K562 (cell line): ENCODE measurements at regions of chr2 and their contacts with region 1.

Region 1: DNA sequence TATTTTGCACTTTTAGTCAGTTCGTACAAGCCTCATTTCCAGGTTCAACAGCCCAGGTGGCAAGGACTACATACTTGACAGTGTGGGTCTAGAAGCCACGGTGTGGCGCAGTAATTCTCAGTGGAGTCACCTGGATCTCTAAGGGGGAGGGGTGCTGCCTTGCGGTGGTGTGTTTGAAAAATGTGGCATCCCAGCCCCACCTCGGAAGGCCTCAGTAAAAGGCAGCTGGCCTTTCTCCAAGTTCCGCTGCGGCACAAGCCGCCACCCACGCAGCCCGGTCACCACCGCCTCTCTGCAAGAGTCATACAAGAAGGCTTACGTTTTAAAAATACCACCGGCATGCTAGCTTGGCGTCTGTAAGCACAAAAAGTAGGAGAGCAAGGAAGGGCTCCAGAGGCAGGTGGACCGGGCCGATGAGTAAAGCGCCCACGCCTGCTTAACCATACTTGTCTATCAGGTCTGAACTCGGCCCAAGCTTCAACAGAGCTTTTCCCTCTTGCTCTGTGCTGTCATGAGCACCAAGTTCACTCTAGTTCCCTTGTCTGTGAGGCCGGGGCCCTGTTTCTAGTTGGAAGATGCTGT is 49.5 kb downstream of the SPRED2 start:
- DNase-seq: peak; percentile 85 to 97 (median 87)
- ATAC-seq: peak; percentile 86
- H3K4me3 ChIP-seq: no peak overlapping the region; the same call in 1 of the 2 replicates
- H3K27ac ChIP-seq: peak overlapping the region; percentile 69
- H3K4me1 ChIP-seq: peaks cover 27 to 81% of the 10 kb centered on the region in 2 experiments
- H3K27me3 ChIP-seq: no peaks in the 10 kb centered on the region
- CTCF ChIP-seq: peak; percentile 35 to 56 (median 54); a peak in 4 of 6 replicates
- EP300 ChIP-seq: peak; percentile 47; the same call in 1 of the 2 replicates
- POLR2A ChIP-seq: no peak
- RAD21 ChIP-seq: peak; percentile 28 to 55; a peak in 2 of 4 replicates

Region 2: DNA sequence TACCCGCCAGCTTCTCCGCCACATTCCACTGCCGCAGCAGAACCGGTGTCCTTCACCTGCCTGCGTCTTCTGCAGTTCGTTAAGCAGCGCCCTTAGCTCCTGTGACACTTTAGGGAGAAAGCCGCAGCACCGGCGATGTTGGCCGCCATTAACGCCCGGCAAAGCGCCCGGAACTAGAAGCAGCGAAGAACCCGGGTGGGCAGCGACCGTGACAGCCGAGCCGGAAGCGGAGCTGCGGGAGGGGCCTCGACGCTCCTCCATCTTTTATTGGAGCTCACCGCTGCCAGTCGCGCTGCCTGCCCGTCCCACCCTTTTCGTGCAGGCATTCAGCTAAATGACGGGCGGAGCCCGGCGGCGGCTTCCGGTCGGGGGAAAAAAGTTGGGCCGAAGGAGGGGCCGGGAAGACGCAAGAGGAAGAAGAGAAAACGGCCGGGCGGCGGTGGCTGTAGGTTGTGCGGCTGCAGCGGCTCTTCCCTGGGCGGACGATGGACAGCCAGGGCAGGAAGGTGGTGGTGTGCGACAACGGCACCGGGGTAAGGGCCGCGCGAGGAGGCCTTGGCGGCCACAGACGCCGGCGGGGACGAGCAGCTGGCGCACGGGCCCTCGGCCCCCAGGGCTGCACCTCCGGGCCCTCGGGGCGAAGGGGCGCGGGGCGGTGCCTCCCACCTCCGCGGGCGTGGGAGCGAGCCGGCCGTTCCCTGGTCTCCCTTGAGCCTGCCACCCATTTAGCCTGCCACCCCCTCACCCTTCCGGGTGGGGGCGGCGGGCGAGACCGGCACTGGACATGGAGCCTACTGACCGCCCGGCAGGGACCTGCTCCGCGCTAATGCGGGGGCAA is 155.2 kb before region 1 on chr2 and contains the start of gene ACTR2:
- CTCF ChIA-PET with region 1: no interaction called
- POLR2A ChIA-PET with region 1: no interaction called
- in situ Hi-C with region 1: no loop called
- intact Hi-C with region 1: no loop called
- DNase-seq: peak; percentile 87 to 97 (median 92)
- ATAC-seq: peak; percentile 88
- H3K4me3 ChIP-seq: peak within 1 kb of the TSS; percentile 72
- H3K27ac ChIP-seq: peak within 1 kb of the TSS; percentile 90
- H3K4me1 ChIP-seq: peaks cover 9 to 12% of the 10 kb centered on the region in 2 experiments; a peak in 3 of 5 replicates
- H3K27me3 ChIP-seq: no peaks in the 10 kb centered on the region
- CTCF ChIP-seq: no peak
- EP300 ChIP-seq: peak; percentile 17; the same call in 1 of the 2 replicates
- POLR2A ChIP-seq: peak; percentile 96
- RAD21 ChIP-seq: no peak
- polyA plus RNA-seq, gene ACTR2: 47.3 to 57.3 TPM

Region 3: GRCh38 chr2:65366595-65367125 is 16.2 kb before region 1 on chr2:
- CTCF ChIA-PET with region 1: no interaction called
- POLR2A ChIA-PET with region 1: interaction called, 7 read pairs
- in situ Hi-C with region 1: no loop called
- intact Hi-C with region 1: loop called (anchors 2 kb)
- DNase-seq: peak; percentile 61 to 86 (median 73)
- ATAC-seq: peak; percentile 83
- H3K4me3 ChIP-seq: peak overlapping the region; percentile 2; the same call in 1 of the 2 replicates
- H3K27ac ChIP-seq: peak overlapping the region; percentile 75
- H3K4me1 ChIP-seq: peaks cover 12 to 64% of the 10 kb centered on the region in 2 experiments
- H3K27me3 ChIP-seq: no peaks in the 10 kb centered on the region
- CTCF ChIP-seq: no peak
- EP300 ChIP-seq: peak; percentile 63; the same call in 1 of the 2 replicates
- POLR2A ChIP-seq: no peak
- RAD21 ChIP-seq: no peak

Region 4: DNA sequence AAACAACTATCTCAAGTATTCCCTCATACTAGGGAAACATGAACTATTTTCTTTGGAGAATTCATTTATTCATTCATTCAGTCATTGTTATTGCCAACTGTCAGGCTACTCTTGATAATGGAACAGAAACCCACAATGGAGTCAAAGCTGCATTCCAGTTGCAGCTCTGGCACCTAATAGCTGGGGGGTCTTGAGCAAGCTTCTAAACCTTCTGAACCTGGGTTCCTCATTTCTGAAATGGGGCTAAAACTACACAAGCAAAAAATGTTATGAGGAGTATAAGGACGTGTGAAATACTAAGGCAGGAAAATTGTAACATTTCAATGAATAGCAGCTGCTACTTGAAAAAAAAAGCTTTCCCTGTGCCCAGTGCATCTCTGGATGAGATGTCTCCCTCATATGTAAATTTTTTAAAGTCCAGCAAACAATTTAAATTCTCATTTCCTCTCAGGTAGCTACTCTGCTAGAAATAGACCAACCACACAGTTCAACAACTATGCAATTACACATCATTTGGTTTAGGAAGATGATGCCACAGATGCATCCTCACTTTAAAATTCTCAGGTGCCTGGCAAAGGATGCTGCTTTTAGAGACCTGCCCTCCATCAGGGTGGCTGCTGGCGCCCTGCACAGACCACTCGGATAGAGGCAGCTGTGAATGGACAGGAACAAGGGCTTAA is 11.0 kb after region 1 on chr2:
- CTCF ChIA-PET with region 1: no interaction called
- POLR2A ChIA-PET with region 1: interaction called, 11 read pairs
- in situ Hi-C with region 1: no loop called
- intact Hi-C with region 1: no loop called
- DNase-seq: no peak
- ATAC-seq: no peak
- H3K4me3 ChIP-seq: no peak overlapping the region
- H3K27ac ChIP-seq: no peak overlapping the region
- H3K4me1 ChIP-seq: peaks cover 12 to 24% of the 10 kb centered on the region in 2 experiments; a peak in 4 of 5 replicates
- H3K27me3 ChIP-seq: no peaks in the 10 kb centered on the region
- CTCF ChIP-seq: no peak
- EP300 ChIP-seq: no peak
- POLR2A ChIP-seq: no peak
- RAD21 ChIP-seq: no peak

Region 5: DNA sequence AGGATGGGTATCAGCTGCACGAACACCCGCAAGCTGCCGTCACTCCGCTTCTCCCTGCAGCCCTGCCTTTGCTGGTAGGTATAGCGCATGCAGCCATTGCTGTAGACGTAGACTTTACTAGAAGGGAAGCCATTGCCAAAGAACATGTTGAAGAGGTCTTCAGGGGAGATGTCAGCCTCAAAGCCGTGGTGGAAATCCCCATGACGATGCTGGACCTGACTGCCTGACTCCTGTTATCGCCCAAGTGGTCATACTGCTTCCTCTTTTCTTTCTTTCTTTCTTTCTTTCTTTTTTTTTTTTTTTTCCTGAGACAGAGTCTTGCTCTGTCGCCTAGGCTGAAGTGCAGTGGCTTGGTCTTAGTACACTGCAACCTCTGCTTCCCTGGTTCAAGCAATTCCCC is 118.2 kb after region 1 on chr2:
- CTCF ChIA-PET with region 1: no interaction called
- POLR2A ChIA-PET with region 1: no interaction called
- in situ Hi-C with region 1: no loop called
- intact Hi-C with region 1: no loop called
- DNase-seq: no peak
- ATAC-seq: no peak
- H3K4me3 ChIP-seq: no peak overlapping the region
- H3K27ac ChIP-seq: no peak overlapping the region
- H3K4me1 ChIP-seq: peaks cover 0 to 8% of the 10 kb centered on the region in 2 experiments; a peak in 1 of 5 replicates
- H3K27me3 ChIP-seq: no peaks in the 10 kb centered on the region
- CTCF ChIP-seq: no peak
- EP300 ChIP-seq: no peak
- POLR2A ChIP-seq: no peak
- RAD21 ChIP-seq: no peak

Region 6: GRCh38 chr2:65554765-65555591 is 172.1 kb after region 1 on chr2:
- CTCF ChIA-PET with region 1: interaction called, 8 read pairs
- POLR2A ChIA-PET with region 1: interaction called, 3 read pairs
- in situ Hi-C with region 1: no loop called
- intact Hi-C with region 1: loop called (anchors 2 kb)
- DNase-seq: peak in 3 of 4 experiments; percentile 23 to 50 (median 30)
- ATAC-seq: no peak
- H3K4me3 ChIP-seq: no peak overlapping the region
- H3K27ac ChIP-seq: no peak overlapping the region
- H3K4me1 ChIP-seq: peaks cover 11 to 14% of the 10 kb centered on the region in 2 experiments; a peak in 4 of 5 replicates
- H3K27me3 ChIP-seq: no peaks in the 10 kb centered on the region
- CTCF ChIP-seq: no peak
- EP300 ChIP-seq: no peak
- POLR2A ChIP-seq: no peak
- RAD21 ChIP-seq: no peak